A549 (cell line): ENCODE measurements at regions of chr16 and their contacts with region 1.

Region 1: GRCh38 chr16:1705688-1706385 is at the start of gene MAPK8IP3:
- DNase-seq: peak; percentile 91
- ATAC-seq: peak; percentile 88
- H3K4me3 ChIP-seq: peak within 1 kb of the TSS; percentile 89
- H3K27ac ChIP-seq: peak within 1 kb of the TSS; percentile 93 to 96
- H3K4me1 ChIP-seq: peaks cover 14% of the 10 kb centered on the region; the same call in 1 of the 3 replicates
- CTCF ChIP-seq: peak; percentile 93
- EP300 ChIP-seq: no peak
- POLR2A ChIP-seq: peak; percentile 94
- RAD21 ChIP-seq: peak; percentile 21 to 64; a peak in 3 of 5 replicates
- polyA plus RNA-seq, gene MAPK8IP3: 12.0 and 13.4 TPM in 2 replicates

Region 2: GRCh38 chr16:1667251-1667650 is 38.6 kb before region 1 on chr16:
- CTCF ChIA-PET with region 1: interaction called, 63 read pairs
- POLR2A ChIA-PET with region 1: no interaction called
- DNase-seq: no peak
- ATAC-seq: peak; percentile 46 to 79; a peak in 4 of 6 replicates
- H3K4me3 ChIP-seq: no peak overlapping the region
- H3K27ac ChIP-seq: no peak overlapping the region
- H3K4me1 ChIP-seq: no peaks in the 10 kb centered on the region
- CTCF ChIP-seq: no peak
- EP300 ChIP-seq: no peak
- POLR2A ChIP-seq: no peak
- RAD21 ChIP-seq: no peak

Region 3: GRCh38 chr16:1691276-1691675 is 14.6 kb before region 1 on chr16:
- CTCF ChIA-PET with region 1: interaction called, 72 read pairs
- POLR2A ChIA-PET with region 1: interaction called, 44 read pairs
- DNase-seq: peak in 1 of 2 experiments; percentile 52
- ATAC-seq: peak; percentile 61 to 65
- H3K4me3 ChIP-seq: peak overlapping the region; percentile 30; the same call in 2 of the 3 replicates
- H3K27ac ChIP-seq: peak overlapping the region; percentile 85 to 95
- H3K4me1 ChIP-seq: peaks cover 68% of the 10 kb centered on the region
- CTCF ChIP-seq: peak; percentile 38; the same call in 2 of the 3 replicates
- EP300 ChIP-seq: no peak
- POLR2A ChIP-seq: no peak
- RAD21 ChIP-seq: peak; percentile 38 to 45; a peak in 4 of 5 replicates

Region 4: DNA sequence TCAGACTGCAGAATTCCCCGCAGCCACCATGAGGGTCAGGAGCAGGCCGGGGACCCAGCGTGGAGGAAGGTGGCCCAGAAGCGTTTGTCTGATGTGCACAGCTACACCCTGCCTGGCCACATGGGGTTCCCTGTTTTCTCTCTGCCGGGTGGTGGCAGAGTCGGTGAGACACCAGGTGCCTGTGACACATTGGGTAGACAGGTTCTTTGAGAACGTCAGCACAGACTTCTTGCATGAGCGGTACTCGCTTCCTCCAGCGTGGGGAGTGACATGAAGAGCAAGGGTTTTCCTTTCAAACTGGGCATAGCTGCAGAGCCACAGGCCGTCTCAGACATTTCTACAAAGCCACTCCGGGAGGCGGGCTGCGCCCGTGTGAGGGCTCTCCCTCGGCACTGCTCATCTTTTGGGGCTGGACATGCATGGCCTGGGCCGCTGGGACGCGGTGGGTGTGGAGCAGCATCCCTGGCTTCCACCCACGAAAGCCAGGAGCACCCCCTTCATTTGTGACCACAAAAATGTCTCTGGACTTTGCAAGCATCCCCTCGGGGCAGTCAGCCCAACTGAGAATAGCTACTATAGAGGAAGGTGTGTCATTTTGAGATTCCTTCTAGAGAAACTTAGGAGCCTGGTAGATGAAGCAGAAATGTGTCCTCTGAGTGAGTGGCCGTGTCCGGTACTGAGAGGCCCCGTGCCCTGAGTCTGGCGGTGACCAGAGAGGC is 39.5 kb after region 1 on chr16:
- CTCF ChIA-PET with region 1: interaction called, 13 read pairs
- POLR2A ChIA-PET with region 1: interaction called, 19 read pairs
- DNase-seq: no peak
- ATAC-seq: no peak
- H3K4me3 ChIP-seq: no peak overlapping the region
- H3K27ac ChIP-seq: peak overlapping the region; percentile 72 to 78; a peak in 5 of 6 replicates
- H3K4me1 ChIP-seq: peaks cover 22% of the 10 kb centered on the region
- CTCF ChIP-seq: no peak
- EP300 ChIP-seq: no peak
- POLR2A ChIP-seq: no peak
- RAD21 ChIP-seq: no peak